Activated CD4-positive, alpha-beta T cell treated with anti-CD3 and anti-CD28 coated beads for 36 hours (primary cell): ENCODE measurements at regions of chr16 and their contacts with region 1.

Region 1: DNA sequence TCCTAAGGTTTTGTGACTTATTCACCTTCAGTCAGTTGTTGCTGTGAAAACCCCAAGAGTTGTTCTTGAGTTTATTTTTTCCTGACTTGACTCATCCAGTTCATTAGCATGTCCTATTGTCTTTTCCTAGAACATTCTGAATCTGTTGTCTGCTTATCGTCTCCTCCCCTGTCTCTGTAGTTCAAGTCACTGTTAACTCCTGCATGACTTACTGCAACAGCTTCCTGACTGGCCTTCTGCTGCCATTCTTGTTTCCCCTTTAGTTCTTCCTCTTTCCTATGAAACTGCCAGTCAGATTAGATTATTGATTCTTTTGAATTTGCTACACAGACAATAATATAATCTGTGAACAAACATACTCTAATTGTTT is 161.5 kb downstream of the FTO start:
- DNase-seq: no peak
- ATAC-seq: peak; percentile 78
- H3K4me3 Mint-ChIP-seq: no peak overlapping the region
- H3K27ac Mint-ChIP-seq: peak overlapping the region; percentile 21
- H3K4me1 Mint-ChIP-seq: peaks cover 14% of the 10 kb centered on the region
- H3K27me3 Mint-ChIP-seq: no peaks in the 10 kb centered on the region

Region 2: DNA sequence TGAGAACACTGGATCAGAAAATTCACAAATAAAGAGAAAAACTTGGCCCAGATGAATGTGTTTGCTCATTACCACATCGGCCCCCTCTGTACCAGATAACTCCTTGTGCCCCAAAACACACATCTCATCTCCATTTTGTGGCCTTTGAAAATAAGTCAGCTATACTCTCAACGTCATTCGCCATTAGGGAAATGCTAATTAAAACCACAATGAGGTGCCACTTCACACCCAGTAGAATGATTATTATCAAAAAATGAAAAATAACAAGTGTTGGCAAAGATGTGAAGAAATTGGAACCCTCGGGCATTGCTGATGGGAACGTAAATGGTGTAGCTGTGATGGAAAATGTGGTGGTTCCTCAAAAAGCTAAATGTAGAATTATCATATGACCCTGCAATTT is 327.9 kb before region 1 on chr16:
- CTCF ChIA-PET with region 1: no interaction called
- POLR2A ChIA-PET with region 1: no interaction called
- intact Hi-C with region 1: loop called in 1 of 2 experiments (anchors 5 kb)
- DNase-seq: no peak
- ATAC-seq: no peak
- H3K4me3 Mint-ChIP-seq: no peak overlapping the region
- H3K27ac Mint-ChIP-seq: no peak overlapping the region
- H3K4me1 Mint-ChIP-seq: peaks cover 22% of the 10 kb centered on the region
- H3K27me3 Mint-ChIP-seq: peaks cover 12% of the 10 kb centered on the region

Region 3: DNA sequence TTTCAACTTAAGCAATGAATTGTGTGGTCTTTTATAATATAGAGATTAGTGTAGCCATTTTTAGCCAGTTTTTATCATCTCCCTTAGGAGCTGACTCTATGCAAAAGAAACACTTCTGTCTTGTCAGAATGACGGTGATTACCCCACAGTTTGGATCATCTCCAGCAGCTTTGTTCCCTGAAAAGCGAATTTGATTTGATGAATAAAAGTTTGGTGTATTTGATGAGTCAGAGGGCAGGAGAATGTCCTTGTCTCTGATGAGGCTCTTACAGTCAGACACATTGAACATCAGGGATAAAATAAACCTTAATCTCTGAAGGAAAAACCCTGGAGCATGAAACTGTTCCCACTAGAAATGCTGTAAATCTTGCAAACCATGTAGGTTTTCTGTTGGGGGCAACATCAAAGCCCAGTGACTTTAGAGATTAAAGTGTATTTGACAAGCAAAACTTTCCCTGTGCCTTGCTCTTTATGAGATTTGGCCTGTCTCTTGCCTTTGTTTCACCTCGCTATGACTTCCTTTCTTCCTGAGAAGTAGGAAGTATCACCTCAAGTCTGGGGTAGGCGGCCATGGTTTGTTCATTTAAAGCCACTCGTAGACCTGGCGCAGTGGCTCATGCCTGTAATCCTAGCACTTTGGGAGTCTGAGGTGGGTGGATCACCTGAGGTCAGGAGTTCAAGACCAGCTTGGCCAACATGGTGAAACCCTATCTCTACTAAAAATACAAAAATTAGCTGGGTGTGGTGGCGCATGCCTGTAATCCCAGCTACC is 47.8 kb after region 1 on chr16:
- CTCF ChIA-PET with region 1: no interaction called
- POLR2A ChIA-PET with region 1: no interaction called
- intact Hi-C with region 1: loop called in 1 of 2 experiments (anchors 2 kb)
- DNase-seq: peak; percentile 33
- ATAC-seq: no peak
- H3K4me3 Mint-ChIP-seq: no peak overlapping the region
- H3K27ac Mint-ChIP-seq: peak overlapping the region; percentile 68
- H3K4me1 Mint-ChIP-seq: peaks cover 29% of the 10 kb centered on the region
- H3K27me3 Mint-ChIP-seq: no peaks in the 10 kb centered on the region